Activated CD8-positive, alpha-beta T cell treated with anti-CD3 and anti-CD28 coated beads, Interleukin-2, amount 10 ng/mL, durations not matched to agents 7 days and 5 days (primary cell): ENCODE measurements at regions of chr7 and their contacts with region 1.

Region 1: GRCh38 chr7:106071356-106071998 is 40.6 kb downstream of the SYPL1 start:
- DNase-seq: peak; percentile 68
- ATAC-seq: peak; percentile 98
- H3K4me3 Mint-ChIP-seq: peak overlapping the region; percentile 76
- H3K27ac Mint-ChIP-seq: peak overlapping the region; percentile 99
- H3K4me1 Mint-ChIP-seq: peaks cover 72% of the 10 kb centered on the region
- H3K27me3 Mint-ChIP-seq: no peaks in the 10 kb centered on the region

Region 2: GRCh38 chr7:105952917-105953595 is 118.4 kb before region 1 on chr7:
- CTCF ChIA-PET with region 1: no interaction called
- POLR2A ChIA-PET with region 1: no interaction called
- DNase-seq: no peak
- ATAC-seq: no peak
- H3K4me3 Mint-ChIP-seq: no peak overlapping the region
- H3K27ac Mint-ChIP-seq: no peak overlapping the region
- H3K4me1 Mint-ChIP-seq: no peaks in the 10 kb centered on the region
- H3K27me3 Mint-ChIP-seq: no peaks in the 10 kb centered on the region

Region 3: DNA sequence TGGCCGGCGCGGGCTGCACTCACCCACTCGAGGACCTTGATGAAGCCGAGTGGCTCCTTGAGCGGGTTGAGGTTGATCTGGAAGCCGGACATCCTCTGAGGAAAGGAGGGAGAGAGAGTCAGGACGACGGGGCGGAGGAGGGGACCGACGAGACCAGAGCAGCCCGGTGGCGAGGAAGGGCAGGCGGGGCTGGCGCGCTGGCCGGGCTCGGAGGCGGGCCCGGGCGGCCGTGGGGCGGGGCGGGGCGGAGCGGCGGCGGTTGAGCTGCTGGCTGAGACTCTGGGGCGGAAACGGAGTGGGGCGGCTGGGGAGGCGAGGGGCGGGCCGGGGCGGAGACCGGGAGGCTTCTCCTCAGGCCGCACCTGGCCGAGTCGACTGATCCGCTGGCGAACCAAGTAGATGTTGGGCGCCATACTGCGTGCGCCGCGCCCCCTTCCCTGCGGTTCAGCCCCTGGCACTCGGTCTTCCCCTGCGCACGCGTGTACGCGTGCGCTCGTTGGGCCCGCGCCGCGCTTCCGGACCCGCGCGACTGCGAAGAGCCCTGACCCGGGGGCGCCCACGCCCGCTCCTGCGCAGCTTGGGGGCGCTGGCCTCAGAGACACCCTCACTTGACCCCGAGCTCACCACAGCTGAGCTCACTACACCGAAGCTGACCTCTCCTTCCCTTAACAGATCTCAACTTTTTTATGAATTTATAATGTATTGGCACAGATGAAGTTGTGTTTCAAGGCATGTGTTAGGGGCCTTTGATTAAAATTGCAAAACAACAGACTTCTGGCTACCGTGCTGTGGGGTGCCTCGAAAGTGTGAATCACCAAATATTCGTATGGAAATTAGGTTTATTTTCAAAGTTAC is 40.9 kb after region 1 on chr7 and contains the start of gene SYPL1:
- CTCF ChIA-PET with region 1: interaction called, 22 read pairs
- POLR2A ChIA-PET with region 1: interaction called, 66 read pairs
- DNase-seq: peak; percentile 95
- ATAC-seq: peak; percentile 87
- H3K4me3 Mint-ChIP-seq: peak within 1 kb of the TSS; percentile 83
- H3K27ac Mint-ChIP-seq: peak within 1 kb of the TSS; percentile 93
- H3K4me1 Mint-ChIP-seq: peaks cover 57% of the 10 kb centered on the region
- H3K27me3 Mint-ChIP-seq: no peaks in the 10 kb centered on the region
- total RNA-seq, gene SYPL1: 51.3 to 52.4 TPM